ENCODE measurements at regions of chr5 and their contacts with region 1.

Region 1: DNA sequence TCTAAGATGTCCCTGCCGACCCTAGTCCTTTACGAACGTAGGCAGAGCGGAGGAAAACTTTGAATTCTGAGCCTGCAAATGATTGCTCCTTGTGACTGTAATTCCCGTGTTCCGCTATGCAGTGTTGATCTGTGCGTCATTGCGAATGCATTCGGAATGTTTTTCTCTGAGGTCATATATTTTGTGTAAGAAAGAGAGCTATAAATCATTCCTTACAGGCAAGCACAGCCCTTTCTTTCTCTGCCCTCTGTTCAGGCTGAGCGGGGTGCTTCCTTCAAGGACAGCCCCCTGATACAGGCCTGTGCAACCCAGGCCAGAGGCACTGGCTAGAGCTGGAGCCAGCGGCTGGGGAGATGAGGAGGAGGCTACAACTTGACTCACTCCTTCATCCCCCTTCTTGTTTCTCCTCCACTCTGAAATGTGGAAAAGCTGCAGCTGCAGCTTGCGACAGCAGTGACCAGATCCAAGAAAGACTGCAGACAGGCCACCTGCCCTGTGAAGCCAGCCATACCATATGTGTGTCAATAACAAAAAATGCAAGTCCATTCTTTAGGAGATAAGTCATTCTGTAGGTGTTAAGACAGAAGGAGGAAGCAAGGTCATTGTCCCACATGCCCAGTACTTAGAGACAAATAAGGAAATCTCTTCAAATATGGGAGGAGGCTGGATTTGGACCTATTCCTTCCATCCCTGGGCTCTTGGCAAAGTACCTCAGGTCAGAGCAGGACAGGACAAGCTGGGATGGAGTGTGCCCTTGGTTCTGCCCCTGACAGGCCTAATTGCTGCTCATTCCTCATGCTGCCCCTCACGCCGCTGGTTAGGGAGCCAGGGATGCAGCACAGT is 345.7 kb upstream of the WWC1 start:
- DNase-seq: no peak
- ATAC-seq: peak; percentile 82

Region 2: DNA sequence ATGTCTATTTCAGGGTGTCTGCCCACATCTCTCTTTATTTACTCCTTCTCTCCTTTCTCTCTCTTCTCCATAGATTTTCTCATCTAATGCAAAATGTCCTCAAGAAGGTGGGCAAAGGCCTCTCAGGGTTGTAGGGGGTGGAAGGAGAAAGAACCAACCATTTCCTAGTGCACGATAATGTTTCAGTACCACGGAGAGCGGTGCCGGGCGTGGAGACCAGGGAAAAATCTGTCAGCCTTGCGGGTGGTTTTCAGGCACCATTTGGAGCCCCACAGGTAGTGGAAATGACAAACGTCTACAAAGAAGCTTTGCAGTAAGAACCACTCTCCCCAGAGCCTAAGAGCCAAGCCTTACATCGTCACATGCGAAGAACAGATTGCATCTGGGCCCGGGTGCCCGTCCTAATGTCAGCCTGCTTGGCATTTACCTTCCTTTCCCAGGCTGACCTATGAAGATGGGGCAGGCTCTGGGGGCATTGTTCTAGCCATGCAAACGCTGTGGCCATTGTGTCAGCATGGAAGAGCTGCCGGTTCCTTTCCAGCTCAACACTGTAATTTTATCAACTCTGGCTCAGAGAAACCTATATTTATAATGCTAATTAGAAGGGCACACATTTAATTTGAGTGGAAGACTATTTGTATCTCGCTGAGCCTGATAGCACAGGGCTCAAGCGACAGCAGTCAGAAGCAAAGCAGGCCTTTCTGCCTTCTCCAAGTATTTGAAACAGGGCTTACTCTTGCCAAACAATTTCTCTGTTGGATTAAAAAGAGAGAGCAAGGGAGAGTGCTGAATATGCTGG is 84.4 kb before region 1 on chr5:
- intact Hi-C with region 1: no loop called
- DNase-seq: no peak
- ATAC-seq: no peak

Region 3: GRCh38 chr5:167908606-167909005 is 37.2 kb before region 1 on chr5:
- intact Hi-C with region 1: no loop called
- DNase-seq: no peak
- ATAC-seq: no peak

Region 4: DNA sequence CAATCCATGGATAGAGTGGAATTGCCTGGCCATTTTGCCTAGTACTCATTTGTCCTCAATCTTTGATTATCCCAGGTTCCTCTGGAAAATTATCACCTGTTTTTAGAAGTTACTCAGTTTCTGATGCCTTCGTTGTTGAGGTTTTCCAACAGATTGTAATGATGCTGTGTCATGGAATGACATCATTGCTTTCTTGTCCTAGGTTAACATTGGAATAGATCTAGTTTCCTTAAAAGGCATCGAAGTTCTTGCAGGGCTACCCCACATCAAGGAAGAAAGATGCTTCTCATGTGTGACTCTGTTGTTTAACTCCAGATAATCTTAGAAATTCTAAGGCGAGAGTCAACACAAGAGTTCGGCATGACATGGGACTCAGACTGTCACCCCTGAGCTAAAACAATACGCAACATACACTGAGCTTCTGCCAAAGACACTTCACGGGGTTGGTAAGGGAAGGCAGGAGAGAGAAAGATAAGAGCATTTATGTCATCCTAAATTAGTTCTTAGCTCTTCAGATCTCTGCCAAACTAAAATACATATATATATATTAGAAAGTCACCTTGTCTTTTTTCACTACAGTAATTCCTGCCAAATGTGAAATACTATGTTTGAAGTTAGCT is 52.5 kb after region 1 on chr5:
- intact Hi-C with region 1: loop called (anchors 5 kb)
- DNase-seq: no peak
- ATAC-seq: peak; percentile 86

Region 5: DNA sequence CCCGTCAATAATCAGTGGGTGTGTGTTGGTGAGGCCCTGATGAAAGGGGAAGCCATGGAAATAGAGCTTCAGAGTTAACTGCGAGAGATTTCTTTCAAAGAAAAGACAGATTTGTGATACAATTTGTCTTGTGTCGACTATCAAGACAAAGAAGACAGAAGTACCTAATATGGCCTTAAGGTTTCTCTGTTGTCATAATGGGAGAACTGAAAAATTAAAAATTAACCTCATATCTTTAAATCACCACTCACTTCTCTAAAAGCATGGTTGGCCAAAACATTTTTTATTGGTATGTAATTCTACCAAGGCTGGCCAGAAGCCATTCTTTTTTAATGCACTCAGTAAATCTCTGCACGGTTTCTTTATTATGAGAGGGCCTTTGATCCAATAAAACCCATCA is 62.8 kb after region 1 on chr5:
- intact Hi-C with region 1: no loop called
- DNase-seq: no peak
- ATAC-seq: no peak

Region 6: DNA sequence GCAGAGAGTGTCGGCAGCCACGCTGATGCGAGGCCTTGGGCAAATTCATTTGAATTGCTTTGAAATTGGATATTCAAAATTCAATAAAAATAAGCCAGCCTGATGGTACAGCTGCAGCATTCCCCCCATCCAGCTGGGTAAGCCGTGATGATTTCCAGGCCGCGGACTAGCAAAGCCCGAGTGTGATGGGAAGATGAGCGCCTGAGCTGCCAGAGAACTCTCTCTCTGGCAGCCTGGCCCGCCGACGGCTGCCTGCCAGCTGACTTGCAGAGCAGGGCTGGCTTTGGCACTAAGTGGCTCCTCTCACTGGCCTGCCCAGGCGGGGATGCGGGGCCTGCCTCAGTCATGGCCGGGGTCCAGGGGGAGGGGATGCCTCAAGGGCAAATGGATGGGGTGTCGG is 77.4 kb after region 1 on chr5:
- intact Hi-C with region 1: loop called (anchors 2 kb)
- DNase-seq: peak; percentile 77
- ATAC-seq: peak; percentile 82

Region 7: GRCh38 chr5:168073991-168074800 is 128.4 kb after region 1 on chr5:
- intact Hi-C with region 1: loop called (anchors 5 kb)
- DNase-seq: no peak
- ATAC-seq: peak; percentile 21

Region 8: DNA sequence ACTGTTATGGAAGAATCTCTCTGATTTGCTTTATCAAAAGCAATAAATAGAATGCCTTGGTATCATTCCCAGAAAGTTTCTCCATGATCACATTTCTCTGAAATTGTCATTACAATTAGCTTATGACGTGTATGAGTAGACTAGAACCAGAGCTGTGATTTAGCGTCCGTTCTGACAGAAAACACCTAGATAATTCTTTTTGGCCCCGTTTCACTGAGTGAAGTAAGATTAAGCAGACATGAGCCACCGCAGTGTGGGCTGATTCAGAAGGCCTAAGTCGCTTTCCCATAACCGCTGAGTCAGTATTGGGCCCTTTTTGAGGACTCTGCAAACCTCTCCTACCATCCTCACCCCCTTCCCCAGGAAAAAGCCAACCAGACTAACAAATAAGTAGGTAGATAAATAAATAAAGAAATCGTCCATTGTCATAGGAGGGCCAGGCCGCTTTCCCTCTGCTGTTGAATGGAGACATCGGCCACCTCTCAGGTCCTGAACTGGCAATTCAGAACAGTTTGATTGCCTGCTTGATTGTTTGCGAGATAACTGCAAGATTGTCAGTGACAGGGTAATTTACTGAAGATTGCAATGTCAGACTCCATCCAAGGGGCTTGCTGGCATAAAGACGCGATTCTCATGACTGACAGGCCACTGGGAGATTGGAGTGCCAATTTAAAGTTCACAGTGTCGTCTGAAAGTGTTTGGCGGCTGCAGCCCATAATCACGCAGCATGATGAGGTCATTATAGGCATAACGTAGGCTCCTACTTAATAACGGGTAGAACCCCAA is 240.7 kb after region 1 on chr5:
- intact Hi-C with region 1: no loop called
- DNase-seq: no peak
- ATAC-seq: peak; percentile 64

Measured in Right ventricle myocardium inferior (tissue), 1 donor.